K562 (cell line): ENCODE measurements at regions of chr7 and their contacts with region 1.

Region 1: GRCh38 chr7:100642534-100642907 is 1.2 kb upstream of the TFR2 start:
- DNase-seq: peak; percentile 92 to 98 (median 96)
- ATAC-seq: peak; percentile 80
- H3K4me3 ChIP-seq: peak overlapping the region; percentile 55
- H3K27ac ChIP-seq: peak overlapping the region; percentile 98
- H3K4me1 ChIP-seq: peaks cover 25 to 55% of the 10 kb centered on the region in 2 experiments
- H3K27me3 ChIP-seq: no peaks in the 10 kb centered on the region
- CTCF ChIP-seq: 0 out of 6 replicates have a peak, but pooled peaks of 1 of the 3 experiments have one; percentile 1
- EP300 ChIP-seq: no peak
- POLR2A ChIP-seq: peak; percentile 76
- RAD21 ChIP-seq: no peak

Region 2: DNA sequence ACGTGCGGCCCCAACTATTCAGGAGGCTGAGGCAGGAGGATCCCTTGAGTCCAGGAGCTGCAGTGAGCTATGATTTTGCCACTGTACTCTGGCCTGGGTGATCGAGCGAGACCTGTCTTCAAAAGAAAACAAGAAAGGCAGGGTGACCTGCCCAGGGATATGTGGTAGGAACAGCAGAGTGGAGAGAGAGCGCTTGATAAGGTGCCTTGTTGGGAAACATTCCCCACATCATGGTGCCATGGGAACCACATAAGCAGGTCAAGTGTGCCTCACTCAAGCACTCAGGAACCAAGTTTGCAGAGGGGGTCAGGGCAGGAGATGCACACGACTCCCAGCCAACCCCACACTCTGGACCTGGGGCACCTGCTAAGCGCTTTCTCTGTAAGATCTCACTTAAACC is 385.5 kb before region 1 on chr7:
- CTCF ChIA-PET with region 1: no interaction called
- POLR2A ChIA-PET with region 1: no interaction called
- in situ Hi-C with region 1: no loop called
- intact Hi-C with region 1: no loop called
- DNase-seq: no peak
- ATAC-seq: no peak
- H3K4me3 ChIP-seq: no peak overlapping the region
- H3K27ac ChIP-seq: no peak overlapping the region
- H3K4me1 ChIP-seq: no peaks in the 10 kb centered on the region; a peak in 1 of 5 replicates
- H3K27me3 ChIP-seq: no peaks in the 10 kb centered on the region
- CTCF ChIP-seq: no peak
- EP300 ChIP-seq: no peak
- POLR2A ChIP-seq: no peak
- RAD21 ChIP-seq: no peak

Region 3: GRCh38 chr7:100626530-100627237 is 15.8 kb before region 1 on chr7:
- CTCF ChIA-PET with region 1: no interaction called
- POLR2A ChIA-PET with region 1: interaction called, 22 read pairs
- in situ Hi-C with region 1: no loop called
- intact Hi-C with region 1: no loop called
- DNase-seq: peak; percentile 92 to 99 (median 99)
- ATAC-seq: peak; percentile 96
- H3K4me3 ChIP-seq: peak overlapping the region; percentile 41; the same call in 1 of the 2 replicates
- H3K27ac ChIP-seq: peak overlapping the region; percentile 74; the same call in 2 of the 3 replicates
- H3K4me1 ChIP-seq: peaks cover 15 to 41% of the 10 kb centered on the region in 2 experiments
- H3K27me3 ChIP-seq: no peaks in the 10 kb centered on the region
- CTCF ChIP-seq: no peak
- EP300 ChIP-seq: no peak; the same call in 1 of the 2 replicates
- POLR2A ChIP-seq: peak; percentile 71; the same call in 1 of the 2 replicates
- RAD21 ChIP-seq: no peak

Region 4: GRCh38 chr7:100655908-100656674 is 13.6 kb after region 1 on chr7 and contains the start of gene ACTL6B:
- CTCF ChIA-PET with region 1: no interaction called
- POLR2A ChIA-PET with region 1: interaction called, 6 read pairs
- in situ Hi-C with region 1: no loop called
- intact Hi-C with region 1: loop called (anchors 1 kb)
- DNase-seq: peak; percentile 89 to 100 (median 100)
- ATAC-seq: peak; percentile 99
- H3K4me3 ChIP-seq: no peak within 1 kb of the TSS
- H3K27ac ChIP-seq: no peak within 1 kb of the TSS
- H3K4me1 ChIP-seq: peaks cover 0 to 18% of the 10 kb centered on the region in 2 experiments; a peak in 3 of 5 replicates
- H3K27me3 ChIP-seq: peaks cover 4 to 14% of the 10 kb centered on the region in 2 experiments; a peak in 4 of 5 replicates
- CTCF ChIP-seq: 0 out of 6 replicates have a peak, but pooled peaks of 1 of the 3 experiments have one; percentile 8
- EP300 ChIP-seq: 0 out of 2 replicates have a peak, but pooled peaks have one; percentile 12
- POLR2A ChIP-seq: no peak
- RAD21 ChIP-seq: 0 out of 4 replicates have a peak, but pooled peaks of 1 of the 2 experiments have one; percentile 19
- polyA plus RNA-seq, gene ACTL6B: not detected

Region 5: DNA sequence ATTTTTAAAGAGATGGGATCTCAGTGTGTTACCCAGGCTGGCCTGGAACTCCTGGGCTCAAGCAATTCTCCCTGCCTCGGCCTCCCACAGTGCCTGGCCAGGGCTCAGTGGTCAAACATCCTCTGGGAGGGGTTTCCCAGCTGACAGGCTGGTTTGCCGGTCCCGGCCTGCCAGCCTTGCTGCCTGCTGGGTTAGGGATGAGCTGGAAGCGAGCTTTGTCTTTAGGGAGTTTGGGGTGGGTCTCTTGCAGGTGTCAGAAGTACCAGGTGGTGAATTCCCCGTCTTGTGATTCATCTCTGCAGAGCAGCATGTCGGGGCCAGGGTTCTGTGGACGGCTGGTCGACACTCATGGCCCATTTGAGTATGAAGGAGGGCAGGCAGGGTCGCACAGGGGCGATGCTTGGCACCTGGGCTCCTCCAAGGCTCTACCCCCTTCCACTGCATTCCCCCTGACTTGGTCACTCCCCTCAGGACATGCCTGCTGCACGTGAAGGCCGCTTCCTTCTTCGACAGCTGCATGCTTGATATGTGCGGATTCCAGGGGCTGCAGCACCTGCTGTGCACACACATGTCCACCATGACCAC is 121.1 kb after region 1 on chr7:
- CTCF ChIA-PET with region 1: no interaction called
- POLR2A ChIA-PET with region 1: no interaction called
- in situ Hi-C with region 1: no loop called
- intact Hi-C with region 1: no loop called
- DNase-seq: peak in 2 of 4 experiments; percentile 7 to 10
- ATAC-seq: no peak
- H3K4me3 ChIP-seq: no peak overlapping the region
- H3K27ac ChIP-seq: no peak overlapping the region
- H3K4me1 ChIP-seq: peaks cover 0 to 8% of the 10 kb centered on the region in 2 experiments; a peak in 2 of 5 replicates
- H3K27me3 ChIP-seq: peaks cover 58 to 88% of the 10 kb centered on the region in 2 experiments
- CTCF ChIP-seq: no peak
- EP300 ChIP-seq: no peak
- POLR2A ChIP-seq: no peak
- RAD21 ChIP-seq: no peak